AG04450 (cell line): ENCODE measurements at regions of chr15 and their contacts with region 1.

Region 1: DNA sequence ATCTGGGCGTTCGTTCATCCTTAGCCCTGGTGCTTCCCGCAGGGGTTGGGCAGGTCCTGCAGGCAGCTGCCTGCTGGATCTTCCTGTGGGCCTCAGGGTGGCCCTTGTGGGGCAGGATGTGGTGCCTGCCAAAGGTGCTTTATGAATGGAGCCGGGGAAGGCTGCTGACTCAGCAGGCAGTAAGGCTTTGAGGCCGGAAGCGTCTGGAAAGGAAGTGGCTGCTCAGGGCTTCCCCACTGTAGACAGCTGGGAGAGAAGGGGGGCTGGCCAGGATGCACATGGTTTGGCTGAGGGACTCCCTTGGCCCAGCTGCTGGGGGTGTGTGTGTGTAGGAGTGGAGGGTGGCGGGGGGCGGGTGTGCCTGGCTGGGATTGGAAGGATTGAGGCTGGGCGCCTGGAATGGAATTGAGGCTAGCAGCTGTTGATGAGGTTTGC is 12.9 kb downstream of the CD276 start:
- DNase-seq: peak; percentile 81
- H3K4me3 ChIP-seq: no peak overlapping the region
- H3K27ac ChIP-seq: peak overlapping the region; percentile 80
- H3K27me3 ChIP-seq: no peaks in the 10 kb centered on the region
- CTCF ChIP-seq: no peak

Region 2: GRCh38 chr15:73567022-73567592 is 129.9 kb before region 1 on chr15:
- CTCF ChIA-PET with region 1: interaction called, 117 read pairs
- POLR2A ChIA-PET with region 1: interaction called, 7 read pairs
- DNase-seq: no peak
- H3K4me3 ChIP-seq: no peak overlapping the region
- H3K27ac ChIP-seq: no peak overlapping the region
- H3K27me3 ChIP-seq: no peaks in the 10 kb centered on the region
- CTCF ChIP-seq: no peak

Region 3: GRCh38 chr15:73617301-73617831 is 79.7 kb before region 1 on chr15:
- CTCF ChIA-PET with region 1: interaction called, 13 read pairs
- POLR2A ChIA-PET with region 1: no interaction called
- DNase-seq: no peak
- H3K4me3 ChIP-seq: no peak overlapping the region
- H3K27ac ChIP-seq: no peak overlapping the region
- H3K27me3 ChIP-seq: no peaks in the 10 kb centered on the region
- CTCF ChIP-seq: no peak

Region 4: DNA sequence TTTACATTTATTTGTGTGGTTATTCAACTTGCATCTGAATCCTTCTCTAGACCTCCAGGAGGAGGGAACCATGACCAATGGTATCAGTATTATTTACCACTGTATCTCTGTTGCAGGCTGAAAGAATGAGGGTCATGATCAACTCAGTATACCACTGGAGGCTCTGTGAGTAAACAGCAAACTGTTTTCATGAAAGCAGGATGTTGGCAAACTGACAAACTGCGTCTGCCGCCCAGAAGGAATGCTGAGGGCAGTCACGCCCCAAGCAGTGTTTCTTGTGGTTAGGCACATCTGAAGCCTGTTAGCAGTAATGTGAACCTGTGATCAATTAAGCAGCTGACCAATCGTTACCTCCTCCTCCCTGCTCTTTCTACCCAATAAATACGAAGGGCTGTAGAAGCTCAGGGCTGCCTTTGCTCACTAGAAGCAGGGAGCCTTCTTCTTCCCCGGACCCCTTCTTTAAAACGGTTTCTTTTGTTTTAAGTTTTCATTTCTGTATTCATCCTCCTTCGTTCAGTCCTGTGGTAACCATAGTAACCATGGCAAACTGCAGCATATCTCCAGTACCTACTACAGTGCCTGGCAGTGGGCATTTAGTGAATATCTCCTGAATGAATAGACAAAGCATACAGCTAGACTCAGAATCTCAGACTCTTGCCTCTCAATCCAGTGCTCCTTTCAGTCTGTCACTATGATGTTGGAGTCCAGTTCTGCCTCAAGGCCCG is 57.4 kb before region 1 on chr15:
- CTCF ChIA-PET with region 1: interaction called, 304 read pairs
- POLR2A ChIA-PET with region 1: interaction called, 6 read pairs
- DNase-seq: no peak
- H3K4me3 ChIP-seq: no peak overlapping the region
- H3K27ac ChIP-seq: no peak overlapping the region
- H3K27me3 ChIP-seq: peaks cover 9% of the 10 kb centered on the region
- CTCF ChIP-seq: no peak

Region 5: GRCh38 chr15:73677146-73677607 is 19.9 kb before region 1 on chr15:
- CTCF ChIA-PET with region 1: interaction called, 92 read pairs
- POLR2A ChIA-PET with region 1: no interaction called
- DNase-seq: no peak
- H3K4me3 ChIP-seq: no peak overlapping the region
- H3K27ac ChIP-seq: no peak overlapping the region
- H3K27me3 ChIP-seq: peaks cover 27% of the 10 kb centered on the region
- CTCF ChIP-seq: peak; percentile 86

Region 6: DNA sequence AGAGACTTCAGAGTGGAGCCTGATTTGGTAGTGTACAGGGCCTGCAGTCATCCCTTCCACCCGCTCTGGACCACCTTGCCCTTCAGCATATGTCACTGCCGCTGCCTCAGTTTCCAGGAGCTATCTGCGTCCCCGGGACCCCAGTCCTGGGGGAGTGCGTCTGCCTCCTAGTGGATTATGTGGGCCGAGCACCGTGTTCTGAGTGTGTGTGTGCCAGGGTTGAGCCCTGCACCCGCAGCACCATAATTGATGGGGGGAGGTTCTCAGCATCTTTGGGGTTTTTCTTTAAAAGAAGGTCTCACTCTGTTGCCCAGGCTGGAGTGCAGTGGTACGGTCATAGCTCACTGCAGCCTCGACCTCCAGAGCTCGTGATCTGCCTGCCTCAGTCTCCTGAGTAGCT is 20.8 kb after region 1 on chr15:
- CTCF ChIA-PET with region 1: interaction called, 15 read pairs
- POLR2A ChIA-PET with region 1: no interaction called
- DNase-seq: no peak
- H3K4me3 ChIP-seq: no peak overlapping the region
- H3K27ac ChIP-seq: no peak overlapping the region
- H3K27me3 ChIP-seq: peaks cover 11% of the 10 kb centered on the region
- CTCF ChIP-seq: no peak

Region 7: DNA sequence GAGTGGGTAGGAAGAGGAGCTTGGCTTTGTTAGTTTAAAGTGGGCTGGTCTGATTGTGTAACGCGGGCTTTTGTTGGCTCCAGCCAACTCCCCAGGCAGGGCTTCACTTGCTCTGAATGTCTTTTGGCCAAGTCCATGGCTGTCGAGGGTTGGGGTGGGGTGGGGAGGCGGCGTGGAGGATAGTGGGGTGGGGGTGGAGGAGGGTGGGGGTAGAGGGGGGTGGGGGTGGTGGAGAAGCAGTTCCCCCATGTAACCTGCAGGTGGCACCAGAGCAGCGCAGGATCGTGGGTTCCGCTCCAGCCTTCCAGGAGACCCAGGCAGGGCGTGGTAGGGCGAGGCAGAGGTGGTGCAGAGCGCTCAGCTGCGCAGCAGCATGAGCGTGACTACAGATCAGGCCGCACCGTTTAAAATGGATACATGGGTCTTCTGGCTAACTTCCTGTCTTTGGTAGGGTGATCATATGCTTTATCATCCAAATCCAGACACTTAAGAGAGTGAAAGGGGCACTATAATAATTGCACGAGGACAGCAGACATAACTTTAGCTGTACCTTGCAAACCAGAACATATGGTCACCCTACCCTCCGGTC is 357.0 kb after region 1 on chr15:
- CTCF ChIA-PET with region 1: no interaction called
- POLR2A ChIA-PET with region 1: no interaction called
- DNase-seq: peak; percentile 20
- H3K4me3 ChIP-seq: no peak overlapping the region
- H3K27ac ChIP-seq: no peak overlapping the region
- H3K27me3 ChIP-seq: peaks cover 6% of the 10 kb centered on the region
- CTCF ChIP-seq: peak; percentile 67